Activated CD4-positive, alpha-beta T cell treated with anti-CD3 and anti-CD28 coated beads for 36 hours (primary cell): ENCODE measurements at regions of chr4 and their contacts with region 1.

Region 1: DNA sequence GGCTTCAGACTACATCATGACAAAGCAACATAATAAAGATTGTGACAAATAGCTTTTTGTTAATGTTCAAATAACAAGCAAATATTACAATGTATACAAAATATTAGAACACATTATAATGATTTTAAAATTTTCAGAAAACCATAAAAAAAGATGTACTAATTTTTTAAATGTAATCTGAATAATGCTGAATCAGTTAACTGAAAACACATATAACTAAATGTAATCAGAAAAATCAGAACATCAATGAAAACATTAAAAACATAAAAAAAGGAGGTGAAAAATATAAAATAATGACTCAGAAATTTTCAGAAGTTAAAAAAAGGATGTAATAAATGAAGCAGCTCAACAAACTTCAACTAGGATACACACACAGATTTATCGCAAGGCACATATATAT is 53.5 kb downstream of the ZNF721 start:
- DNase-seq: no peak
- ATAC-seq: no peak
- H3K4me3 Mint-ChIP-seq: no peak overlapping the region
- H3K27ac Mint-ChIP-seq: no peak overlapping the region
- H3K4me1 Mint-ChIP-seq: no peaks in the 10 kb centered on the region
- H3K27me3 Mint-ChIP-seq: no peaks in the 10 kb centered on the region

Region 2: GRCh38 chr4:161496-162284 is 283.7 kb before region 1 on chr4:
- CTCF ChIA-PET with region 1: no interaction called
- POLR2A ChIA-PET with region 1: no interaction called
- intact Hi-C with region 1: loop called in 1 of 2 experiments (anchors 5 kb)
- DNase-seq: no peak
- ATAC-seq: no peak
- H3K4me3 Mint-ChIP-seq: no peak overlapping the region
- H3K27ac Mint-ChIP-seq: no peak overlapping the region
- H3K4me1 Mint-ChIP-seq: no peaks in the 10 kb centered on the region
- H3K27me3 Mint-ChIP-seq: no peaks in the 10 kb centered on the region

Region 3: GRCh38 chr4:373062-373839 is 72.2 kb before region 1 on chr4:
- CTCF ChIA-PET with region 1: no interaction called
- POLR2A ChIA-PET with region 1: no interaction called
- intact Hi-C with region 1: loop called (anchors 5 to 10 kb)
- DNase-seq: no peak
- ATAC-seq: no peak
- H3K4me3 Mint-ChIP-seq: no peak overlapping the region
- H3K27ac Mint-ChIP-seq: no peak overlapping the region
- H3K4me1 Mint-ChIP-seq: no peaks in the 10 kb centered on the region
- H3K27me3 Mint-ChIP-seq: no peaks in the 10 kb centered on the region